ENCODE measurements at regions of chr3 and their contacts with region 1.

Region 1: GRCh38 chr3:183745300-183746098 is 47.9 kb downstream of the YEATS2 start:
- DNase-seq: no peak
- ATAC-seq: no peak
- H3K4me3 ChIP-seq: no peak overlapping the region
- H3K27ac ChIP-seq: no peak overlapping the region
- H3K4me1 ChIP-seq: no peaks in the 10 kb centered on the region
- H3K27me3 ChIP-seq: no peaks in the 10 kb centered on the region
- CTCF ChIP-seq: no peak

Region 2: DNA sequence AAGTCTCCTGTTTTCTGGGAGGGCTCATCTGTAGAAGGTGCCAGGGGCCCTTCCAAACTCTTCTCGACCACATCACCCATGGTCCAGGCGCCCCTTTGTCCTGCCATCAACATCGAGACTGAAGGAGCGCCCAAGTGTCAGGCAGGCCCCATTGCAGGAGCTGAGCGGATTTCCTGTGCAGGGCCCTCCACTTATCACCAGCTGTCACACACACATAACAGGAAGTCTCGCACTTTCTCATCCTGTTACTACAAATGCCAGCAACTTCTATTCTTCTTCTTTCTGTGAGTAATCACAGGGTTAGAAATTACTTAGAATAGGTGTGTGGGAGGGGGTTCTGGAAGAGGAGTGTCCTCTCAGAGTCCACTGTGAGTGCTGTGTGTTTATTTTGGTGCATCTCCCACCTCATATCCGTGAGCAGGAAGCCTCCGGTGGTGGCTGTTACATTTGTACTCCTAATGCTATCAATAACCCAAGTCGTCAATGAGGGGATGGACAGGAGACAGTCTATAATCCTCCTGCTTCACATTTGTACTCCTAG is 189.9 kb before region 1 on chr3 and contains the start of gene KLHL6:
- intact Hi-C with region 1: no loop called
- DNase-seq: peak; percentile 25 to 58
- ATAC-seq: peak; percentile 83 to 93 (median 87)
- H3K4me3 ChIP-seq: peak within 1 kb of the TSS in 9 of 10 donors; percentile 3 to 61 (median 23)
- H3K27ac ChIP-seq: peak within 1 kb of the TSS in 9 of 10 donors; percentile 36 to 91 (median 72)
- H3K4me1 ChIP-seq: peaks cover 0 to 47% (median 23%) of the 10 kb centered on the region in 9 donors
- H3K27me3 ChIP-seq: no peaks in the 10 kb centered on the region
- CTCF ChIP-seq: no peak
- total RNA-seq, gene KLHL6: 0.47 to 5.1 (median 0.93) TPM

Region 3: GRCh38 chr3:183594636-183595035 is 150.9 kb before region 1 on chr3:
- intact Hi-C with region 1: loop called in 1 of 10 experiments (anchors 5 kb)
- DNase-seq: no peak
- ATAC-seq: no peak
- H3K4me3 ChIP-seq: no peak overlapping the region
- H3K27ac ChIP-seq: no peak overlapping the region
- H3K4me1 ChIP-seq: peaks cover 0 to 10% (median 4%) of the 10 kb centered on the region in 9 donors
- H3K27me3 ChIP-seq: no peaks in the 10 kb centered on the region
- CTCF ChIP-seq: no peak

Region 4: GRCh38 chr3:183688871-183689270 is 56.6 kb before region 1 on chr3:
- intact Hi-C with region 1: no loop called
- DNase-seq: no peak
- ATAC-seq: no peak
- H3K4me3 ChIP-seq: no peak overlapping the region
- H3K27ac ChIP-seq: peak overlapping the region in 1 of 10 donors; percentile 10
- H3K4me1 ChIP-seq: peaks cover 0 to 10% (median 0%) of the 10 kb centered on the region in 9 donors
- H3K27me3 ChIP-seq: no peaks in the 10 kb centered on the region
- CTCF ChIP-seq: no peak

Measured in heart right ventricle (tissue), 16 donors.